SK-N-SH (cell line): ENCODE measurements at regions of chr11 and their contacts with region 1.

Region 1: DNA sequence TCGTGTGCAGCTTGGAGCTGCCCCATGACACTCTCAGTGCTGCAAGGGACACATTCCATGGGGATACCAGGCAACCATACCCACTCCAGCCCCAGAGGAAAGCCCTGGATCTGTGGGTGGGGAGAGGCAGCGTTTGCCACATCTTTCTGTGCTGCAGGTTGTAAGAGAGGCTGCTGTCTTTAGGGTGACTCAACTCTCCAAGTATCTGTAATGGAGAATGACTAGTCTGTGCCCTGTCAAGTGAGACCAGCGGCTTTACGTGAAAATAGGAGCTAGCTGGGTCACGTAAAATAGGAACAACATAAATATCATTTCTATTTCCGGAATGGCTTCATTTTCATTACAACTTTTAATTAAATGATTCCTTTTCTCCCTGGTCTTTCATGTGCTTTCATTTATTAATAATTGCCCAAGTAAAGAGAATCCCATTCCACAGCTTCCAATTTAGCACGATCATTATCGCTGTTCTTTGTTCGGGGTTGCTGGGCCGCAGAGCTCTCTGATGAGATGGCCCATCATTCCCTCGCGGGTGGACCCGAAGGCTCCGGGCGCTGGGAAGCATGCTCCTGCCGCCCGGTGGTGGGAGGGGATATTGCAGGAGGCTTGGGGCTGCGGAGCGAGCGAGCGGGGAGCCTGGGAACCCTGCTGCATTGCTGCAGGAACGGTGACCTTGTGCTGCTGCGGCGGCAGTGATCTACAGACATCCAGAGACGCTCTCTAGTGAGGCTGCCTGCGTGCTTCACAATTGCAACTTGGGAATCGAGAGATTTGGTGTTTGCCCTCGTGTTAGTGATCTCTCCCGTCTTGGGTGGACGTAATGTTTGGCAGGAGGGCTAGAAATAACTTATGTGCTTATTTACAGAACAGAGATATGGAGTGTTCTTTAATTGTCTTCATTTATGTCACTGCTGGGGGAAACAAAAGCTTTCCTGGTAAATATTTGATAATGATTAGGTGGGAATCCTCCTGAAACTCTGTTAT is 10.6 kb downstream of the SLC6A5 start:
- DNase-seq: peak; percentile 90
- H3K4me3 ChIP-seq: peak overlapping the region in 1 of 2 experiments; percentile 45; a peak in 2 of 4 replicates
- H3K27ac ChIP-seq: peak overlapping the region in 1 of 2 experiments; percentile 16; a peak in 1 of 4 replicates
- H3K4me1 ChIP-seq: peaks cover 0 to 19% of the 10 kb centered on the region in 2 experiments; a peak in 1 of 4 replicates
- H3K27me3 ChIP-seq: no peaks in the 10 kb centered on the region
- CTCF ChIP-seq: peak; percentile 82
- EP300 ChIP-seq: no peak; a peak in 1 of 4 replicates
- RAD21 ChIP-seq: peak; percentile 99

Region 2: DNA sequence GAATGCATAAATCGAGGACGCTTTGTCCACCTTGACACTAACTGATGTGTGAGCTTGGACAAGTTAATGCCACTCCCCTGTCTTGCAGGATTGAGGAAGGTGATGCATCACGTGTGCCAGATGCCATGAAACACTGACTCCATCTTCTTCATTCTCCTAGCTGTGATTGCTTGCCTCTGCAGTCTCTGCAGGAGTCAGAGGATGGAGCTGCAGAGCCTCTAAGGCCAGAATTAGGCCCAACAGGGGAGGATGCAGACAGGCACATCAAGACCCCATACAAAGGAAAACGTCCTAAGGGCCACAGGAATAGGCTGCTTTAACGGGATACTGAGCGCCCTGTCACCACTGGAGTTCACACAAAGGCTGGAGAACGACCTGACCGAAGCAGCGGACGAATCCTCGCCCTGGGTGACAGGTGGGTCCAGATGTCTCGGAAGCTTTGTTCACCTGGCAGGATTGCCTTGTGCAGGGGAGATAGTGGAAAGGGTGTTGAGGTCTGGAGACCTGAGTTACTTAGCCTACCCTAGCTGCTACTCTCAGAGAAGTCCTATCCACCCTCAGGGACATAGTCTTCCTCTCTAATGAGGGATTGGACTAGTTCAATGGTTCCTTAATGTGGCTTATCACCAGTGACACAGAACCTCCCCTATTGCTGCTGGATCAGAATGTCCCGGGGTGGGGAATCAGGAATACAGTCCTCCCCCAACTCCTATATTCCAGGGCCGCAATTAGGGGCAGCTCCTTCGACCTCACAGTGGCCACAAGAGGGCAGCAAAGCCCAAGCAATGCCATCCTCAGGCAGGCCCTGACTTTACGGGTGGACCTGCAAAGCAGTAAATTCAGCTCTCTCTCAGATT is 482.1 kb before region 1 on chr11:
- CTCF ChIA-PET with region 1: interaction called, 18 read pairs
- POLR2A ChIA-PET with region 1: no interaction called
- DNase-seq: peak; percentile 84
- H3K4me3 ChIP-seq: no peak overlapping the region; a peak in 1 of 4 replicates
- H3K27ac ChIP-seq: peak overlapping the region in 1 of 2 experiments; percentile 54; a peak in 1 of 4 replicates
- H3K4me1 ChIP-seq: no peaks in the 10 kb centered on the region
- H3K27me3 ChIP-seq: no peaks in the 10 kb centered on the region
- CTCF ChIP-seq: peak; percentile 89
- EP300 ChIP-seq: no peak
- RAD21 ChIP-seq: peak; percentile 97

Region 3: DNA sequence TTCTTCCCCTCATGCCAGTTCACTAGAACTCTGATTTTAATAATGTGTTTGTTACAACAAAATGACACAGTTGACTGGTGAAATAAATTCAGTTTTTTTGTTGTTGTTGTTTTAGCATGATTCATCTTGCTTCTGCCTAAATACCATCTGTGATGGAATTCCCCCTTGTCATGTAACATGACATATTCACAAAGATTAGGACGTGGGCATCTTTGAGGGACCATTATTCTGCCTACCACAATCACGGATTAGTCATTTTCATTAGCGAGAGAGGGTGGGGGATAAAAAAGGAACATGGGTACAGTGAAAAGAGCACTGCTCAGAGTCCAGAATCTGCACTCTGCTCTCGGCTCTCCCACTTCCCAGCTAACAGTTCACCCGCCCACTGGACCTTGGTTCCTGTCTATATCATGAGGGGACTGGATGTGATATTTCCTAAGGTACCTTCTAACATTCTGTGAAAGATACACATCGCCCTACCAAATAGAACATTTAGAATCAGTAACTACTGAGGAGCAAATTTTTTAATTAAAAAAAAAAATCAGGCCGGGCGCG is 235.2 kb before region 1 on chr11:
- CTCF ChIA-PET with region 1: interaction called, 11 read pairs
- POLR2A ChIA-PET with region 1: no interaction called
- DNase-seq: no peak
- H3K4me3 ChIP-seq: no peak overlapping the region
- H3K27ac ChIP-seq: no peak overlapping the region
- H3K4me1 ChIP-seq: no peaks in the 10 kb centered on the region
- H3K27me3 ChIP-seq: no peaks in the 10 kb centered on the region
- CTCF ChIP-seq: no peak
- EP300 ChIP-seq: no peak
- RAD21 ChIP-seq: no peak

Region 4: GRCh38 chr11:20406484-20406883 is 203.5 kb before region 1 on chr11:
- CTCF ChIA-PET with region 1: interaction called, 89 read pairs
- POLR2A ChIA-PET with region 1: no interaction called
- DNase-seq: no peak
- H3K4me3 ChIP-seq: no peak overlapping the region
- H3K27ac ChIP-seq: no peak overlapping the region
- H3K4me1 ChIP-seq: no peaks in the 10 kb centered on the region
- H3K27me3 ChIP-seq: no peaks in the 10 kb centered on the region
- CTCF ChIP-seq: no peak
- EP300 ChIP-seq: no peak
- RAD21 ChIP-seq: no peak

Region 5: DNA sequence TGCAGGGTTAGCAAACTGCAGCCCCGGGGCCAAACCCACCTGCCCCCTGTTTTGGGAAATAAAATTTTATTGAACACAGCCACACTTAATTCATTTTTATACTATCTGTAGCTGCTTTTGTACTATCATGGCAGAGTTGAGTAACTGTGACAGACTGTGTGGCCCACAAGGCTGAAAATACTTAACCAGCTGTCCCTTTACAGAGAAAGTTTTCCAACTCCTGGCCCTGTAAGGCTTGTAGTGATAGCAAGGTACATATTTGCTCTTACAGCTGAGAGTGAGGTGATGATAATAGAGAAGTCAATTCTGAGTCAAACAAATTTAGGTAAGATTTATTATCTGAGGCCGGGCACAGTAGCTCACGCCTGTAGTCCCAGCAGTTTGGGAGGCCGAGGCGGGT is 98.0 kb before region 1 on chr11:
- CTCF ChIA-PET with region 1: interaction called, 10 read pairs
- POLR2A ChIA-PET with region 1: no interaction called
- DNase-seq: no peak
- H3K4me3 ChIP-seq: no peak overlapping the region
- H3K27ac ChIP-seq: no peak overlapping the region
- H3K4me1 ChIP-seq: peaks cover 0 to 3% of the 10 kb centered on the region in 2 experiments; a peak in 1 of 4 replicates
- H3K27me3 ChIP-seq: no peaks in the 10 kb centered on the region
- CTCF ChIP-seq: no peak
- EP300 ChIP-seq: no peak
- RAD21 ChIP-seq: no peak

Region 6: DNA sequence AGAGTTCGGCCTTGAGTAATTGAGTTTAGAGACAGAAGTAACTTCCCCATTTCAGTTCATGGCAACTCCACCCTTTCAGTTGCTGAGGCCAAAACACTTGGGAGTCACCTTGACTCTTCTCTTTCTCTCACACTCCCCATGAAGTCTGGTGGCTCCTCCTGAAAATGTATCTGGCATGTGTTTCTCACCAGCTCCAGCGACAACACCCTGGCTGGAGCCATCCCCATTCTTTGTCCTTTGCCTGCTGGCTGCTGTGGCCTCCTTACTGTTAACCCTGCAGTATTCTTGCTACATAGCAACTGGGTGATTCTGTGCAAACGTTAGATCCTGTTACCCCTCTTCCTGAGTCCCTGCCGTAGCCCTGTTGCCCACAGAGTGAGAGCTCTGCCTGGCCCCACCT is 13.2 kb after region 1 on chr11:
- CTCF ChIA-PET with region 1: interaction called, 23 read pairs
- POLR2A ChIA-PET with region 1: no interaction called
- DNase-seq: no peak
- H3K4me3 ChIP-seq: no peak overlapping the region
- H3K27ac ChIP-seq: no peak overlapping the region
- H3K4me1 ChIP-seq: peaks cover 0 to 6% of the 10 kb centered on the region in 2 experiments; a peak in 1 of 4 replicates
- H3K27me3 ChIP-seq: no peaks in the 10 kb centered on the region
- CTCF ChIP-seq: no peak
- EP300 ChIP-seq: no peak
- RAD21 ChIP-seq: no peak

Region 7: GRCh38 chr11:21105196-21105917 is 495.3 kb after region 1 on chr11:
- CTCF ChIA-PET with region 1: no interaction called
- POLR2A ChIA-PET with region 1: no interaction called
- DNase-seq: no peak
- H3K4me3 ChIP-seq: no peak overlapping the region
- H3K27ac ChIP-seq: no peak overlapping the region
- H3K4me1 ChIP-seq: no peaks in the 10 kb centered on the region; a peak in 1 of 4 replicates
- H3K27me3 ChIP-seq: no peaks in the 10 kb centered on the region
- CTCF ChIP-seq: no peak
- EP300 ChIP-seq: no peak
- RAD21 ChIP-seq: no peak